ENCODE measurements at regions of chr9 and their contacts with region 1.

Region 1: GRCh38 chr9:99259231-99259918 is 37.3 kb downstream of the SEC61B start:
- DNase-seq: peak; percentile 97 to 99
- ATAC-seq: peak; percentile 59 to 63
- H3K4me3 ChIP-seq: peak overlapping the region; percentile 34 to 49 (median 44)
- H3K27ac ChIP-seq: peak overlapping the region; percentile 93 to 100 (median 98)
- H3K4me1 ChIP-seq: peaks cover 29 to 48% of the 10 kb centered on the region in 2 donors
- H3K27me3 ChIP-seq: no peaks in the 10 kb centered on the region
- CTCF ChIP-seq: peak in 1 of 5 experiments; percentile 38
- POLR2A ChIP-seq: peak; percentile 91 to 94

Region 2: DNA sequence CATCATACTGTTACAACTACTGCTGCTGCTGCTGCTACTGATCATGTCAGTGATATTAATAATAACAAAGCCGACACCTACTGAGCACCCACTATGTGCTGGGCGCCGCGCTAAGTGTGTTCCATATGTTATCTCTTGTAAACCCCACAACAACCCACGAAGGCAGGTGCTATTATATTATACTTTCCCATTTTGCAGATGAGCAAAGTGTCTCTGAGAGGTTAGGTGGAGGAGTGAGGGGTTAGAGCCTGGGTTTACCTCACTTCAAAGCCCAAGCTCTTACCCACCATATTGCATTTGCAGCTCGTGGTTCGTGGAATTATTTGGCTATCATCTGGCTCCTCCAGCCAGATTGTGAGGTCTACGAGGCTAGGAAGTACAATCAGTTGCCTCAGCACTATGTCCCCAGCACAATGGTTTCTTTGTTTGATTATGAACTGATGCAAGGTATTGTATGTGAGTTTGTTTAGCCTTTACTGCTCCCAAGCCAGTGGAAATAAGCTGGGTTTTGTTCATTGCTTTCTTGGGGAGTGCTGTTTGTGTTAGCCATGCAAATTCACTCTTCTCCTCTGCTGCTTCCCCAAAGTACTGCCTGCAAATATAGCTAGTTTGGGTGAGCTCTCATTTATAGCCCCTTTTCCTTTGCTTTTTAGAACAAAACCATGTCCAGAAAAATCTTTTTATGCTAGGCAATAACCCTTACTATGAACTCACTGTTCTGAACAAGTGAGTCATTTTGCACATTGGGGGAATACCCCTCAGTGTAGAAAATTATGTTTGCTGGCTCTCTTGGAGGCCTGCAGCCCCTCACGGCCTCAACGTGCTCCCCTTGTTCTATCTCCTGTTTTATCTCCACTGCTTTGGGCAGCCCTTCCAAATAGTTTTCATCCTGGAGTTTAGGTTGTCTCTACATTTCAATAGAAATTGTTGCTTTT is 85.5 kb before region 1 on chr9:
- in situ Hi-C with region 1: no loop called
- intact Hi-C with region 1: no loop called
- DNase-seq: no peak
- ATAC-seq: no peak
- H3K4me3 ChIP-seq: no peak overlapping the region
- H3K27ac ChIP-seq: no peak overlapping the region
- H3K4me1 ChIP-seq: no peaks in the 10 kb centered on the region
- H3K27me3 ChIP-seq: peaks cover 0 to 4% (median 0%) of the 10 kb centered on the region in 3 donors
- CTCF ChIP-seq: no peak
- POLR2A ChIP-seq: no peak

Region 3: DNA sequence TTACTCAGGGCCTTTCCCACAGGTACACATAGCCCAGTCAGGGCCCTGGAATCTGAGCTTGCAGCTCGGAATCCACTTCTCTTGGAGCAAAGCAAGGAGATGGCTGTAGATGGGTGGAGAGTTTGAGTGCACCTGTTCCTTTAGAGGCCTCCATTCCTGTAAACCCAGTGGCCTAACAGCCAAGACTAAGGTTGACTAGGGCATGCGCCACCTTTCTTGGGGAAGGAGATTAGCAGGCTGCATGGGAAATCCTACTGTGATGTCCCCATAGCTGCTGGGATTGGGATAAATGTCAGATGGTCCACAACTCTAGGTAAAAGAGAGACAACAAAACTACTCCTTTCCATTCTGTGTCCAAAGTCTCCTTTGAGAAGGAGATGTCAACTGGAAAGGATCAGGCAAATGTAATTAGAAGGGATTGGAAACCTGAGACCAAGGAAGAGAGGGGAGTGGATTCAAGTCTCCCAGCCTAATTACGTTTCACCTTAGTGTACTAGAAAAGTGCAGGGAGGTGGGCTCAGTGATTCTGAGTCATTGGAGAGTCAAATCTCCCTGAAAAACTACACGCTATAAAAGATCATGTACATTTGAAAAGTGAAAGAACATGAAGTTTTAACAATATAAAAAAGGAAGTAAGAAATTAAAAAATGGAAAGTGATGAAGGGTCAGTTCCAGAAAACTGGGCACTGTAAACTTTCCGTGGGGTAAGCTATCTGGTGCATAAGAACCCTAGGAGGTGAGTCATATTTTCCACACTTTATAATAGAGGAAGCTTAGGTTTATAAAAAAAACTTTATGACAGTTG is 66.9 kb after region 1 on chr9:
- in situ Hi-C with region 1: no loop called
- intact Hi-C with region 1: no loop called
- DNase-seq: no peak
- ATAC-seq: no peak
- H3K4me3 ChIP-seq: no peak overlapping the region
- H3K27ac ChIP-seq: no peak overlapping the region
- H3K4me1 ChIP-seq: no peaks in the 10 kb centered on the region
- H3K27me3 ChIP-seq: no peaks in the 10 kb centered on the region
- CTCF ChIP-seq: no peak
- POLR2A ChIP-seq: no peak

Region 4: DNA sequence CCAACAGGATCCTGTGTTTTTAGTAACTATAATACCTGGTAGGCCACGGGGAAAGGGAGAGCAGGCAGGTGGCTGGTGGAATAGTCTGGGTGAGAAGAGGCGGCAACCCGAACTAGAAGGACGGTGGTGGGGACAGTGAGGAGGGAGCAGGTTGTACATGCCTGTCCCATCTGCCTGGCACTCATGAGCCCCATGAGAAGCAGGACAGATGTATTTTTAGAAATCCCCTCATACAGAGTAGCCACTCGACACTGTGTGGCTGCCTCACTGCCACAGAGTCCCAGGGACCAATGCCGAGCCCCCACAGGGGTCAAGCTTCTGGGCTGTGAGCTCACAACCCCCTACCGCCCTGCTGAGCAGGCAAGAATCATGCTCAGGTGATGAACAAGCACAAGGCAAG is 99.3 kb after region 1 on chr9:
- in situ Hi-C with region 1: loop called in 3 of 4 experiments (anchors 5 to 10 kb)
- intact Hi-C with region 1: loop called (anchors 1 kb)
- DNase-seq: peak; percentile 82 to 95
- ATAC-seq: peak; percentile 53 to 59
- H3K4me3 ChIP-seq: peak overlapping the region in 3 of 4 donors; percentile 8 to 22 (median 14)
- H3K27ac ChIP-seq: peak overlapping the region; percentile 83 to 99 (median 96)
- H3K4me1 ChIP-seq: peaks cover 43 to 49% of the 10 kb centered on the region in 2 donors
- H3K27me3 ChIP-seq: no peaks in the 10 kb centered on the region
- CTCF ChIP-seq: no peak
- POLR2A ChIP-seq: peak; percentile 53 to 83

Region 5: DNA sequence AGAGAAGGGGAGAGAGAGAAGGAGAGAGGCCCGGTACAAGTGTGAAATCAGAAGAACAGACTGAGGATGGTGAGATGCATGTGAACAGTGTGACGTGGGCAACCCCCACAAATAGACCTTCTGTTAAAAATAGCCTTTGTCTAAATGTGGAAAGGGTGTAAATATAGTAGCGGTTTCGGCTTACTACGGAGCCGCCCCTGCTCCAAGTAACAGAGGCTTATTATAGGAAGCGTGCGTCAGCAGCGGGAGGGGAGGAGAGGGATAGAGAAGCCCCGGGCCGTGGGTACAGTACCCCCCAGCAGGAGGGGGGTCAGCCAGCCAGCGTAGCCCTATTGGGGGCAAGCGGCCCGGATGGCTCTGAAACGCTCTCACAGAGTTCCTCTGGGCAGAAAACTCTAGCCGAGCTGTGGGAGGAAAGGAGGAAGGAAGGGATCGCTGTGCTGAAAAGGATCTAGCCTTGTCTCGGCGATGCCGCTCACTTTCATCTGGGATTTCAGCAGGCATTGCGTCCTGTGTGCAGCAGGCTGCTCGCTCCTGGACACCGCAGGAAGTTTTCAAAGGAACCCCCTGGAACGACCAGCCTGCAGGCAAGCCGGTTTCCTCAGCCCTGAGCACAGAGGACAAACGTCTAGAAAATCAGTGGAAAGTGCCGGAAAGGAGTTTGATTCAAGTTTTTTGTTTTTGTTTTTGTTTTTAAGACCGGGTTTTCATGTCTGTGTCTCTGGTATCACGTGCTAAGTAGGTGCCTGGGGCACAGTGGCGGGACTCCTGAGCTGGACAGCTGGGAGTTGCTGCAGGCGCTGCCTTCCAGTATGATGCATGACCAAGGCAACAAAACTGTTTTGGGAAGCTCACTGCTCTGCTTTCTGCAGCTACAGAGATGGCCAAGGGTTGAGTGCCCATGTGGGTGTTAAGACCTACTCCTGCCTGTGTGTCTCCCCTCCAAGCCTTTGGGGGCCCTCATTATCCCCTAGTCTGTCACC is 109.3 kb after region 1 on chr9:
- in situ Hi-C with region 1: loop called in 1 of 4 experiments (anchors 10 kb)
- intact Hi-C with region 1: loop called (anchors 1 kb)
- DNase-seq: peak; percentile 79 to 93
- ATAC-seq: peak; percentile 85 to 92
- H3K4me3 ChIP-seq: peak overlapping the region; percentile 53 to 70 (median 60)
- H3K27ac ChIP-seq: peak overlapping the region; percentile 92 to 99 (median 96)
- H3K4me1 ChIP-seq: peaks cover 37 to 48% of the 10 kb centered on the region in 2 donors
- H3K27me3 ChIP-seq: no peaks in the 10 kb centered on the region
- CTCF ChIP-seq: no peak
- POLR2A ChIP-seq: peak; percentile 92 to 93

Region 6: GRCh38 chr9:99445371-99445891 is 186.1 kb after region 1 on chr9:
- in situ Hi-C with region 1: no loop called
- intact Hi-C with region 1: loop called (anchors 2 kb)
- DNase-seq: peak; percentile 72 to 88
- ATAC-seq: peak; percentile 98 to 99
- H3K4me3 ChIP-seq: no peak overlapping the region
- H3K27ac ChIP-seq: peak overlapping the region; percentile 60 to 89 (median 76)
- H3K4me1 ChIP-seq: peaks cover 16 to 19% of the 10 kb centered on the region in 2 donors
- H3K27me3 ChIP-seq: no peaks in the 10 kb centered on the region
- CTCF ChIP-seq: no peak
- POLR2A ChIP-seq: peak in 1 of 2 donors; percentile 39

Region 7: DNA sequence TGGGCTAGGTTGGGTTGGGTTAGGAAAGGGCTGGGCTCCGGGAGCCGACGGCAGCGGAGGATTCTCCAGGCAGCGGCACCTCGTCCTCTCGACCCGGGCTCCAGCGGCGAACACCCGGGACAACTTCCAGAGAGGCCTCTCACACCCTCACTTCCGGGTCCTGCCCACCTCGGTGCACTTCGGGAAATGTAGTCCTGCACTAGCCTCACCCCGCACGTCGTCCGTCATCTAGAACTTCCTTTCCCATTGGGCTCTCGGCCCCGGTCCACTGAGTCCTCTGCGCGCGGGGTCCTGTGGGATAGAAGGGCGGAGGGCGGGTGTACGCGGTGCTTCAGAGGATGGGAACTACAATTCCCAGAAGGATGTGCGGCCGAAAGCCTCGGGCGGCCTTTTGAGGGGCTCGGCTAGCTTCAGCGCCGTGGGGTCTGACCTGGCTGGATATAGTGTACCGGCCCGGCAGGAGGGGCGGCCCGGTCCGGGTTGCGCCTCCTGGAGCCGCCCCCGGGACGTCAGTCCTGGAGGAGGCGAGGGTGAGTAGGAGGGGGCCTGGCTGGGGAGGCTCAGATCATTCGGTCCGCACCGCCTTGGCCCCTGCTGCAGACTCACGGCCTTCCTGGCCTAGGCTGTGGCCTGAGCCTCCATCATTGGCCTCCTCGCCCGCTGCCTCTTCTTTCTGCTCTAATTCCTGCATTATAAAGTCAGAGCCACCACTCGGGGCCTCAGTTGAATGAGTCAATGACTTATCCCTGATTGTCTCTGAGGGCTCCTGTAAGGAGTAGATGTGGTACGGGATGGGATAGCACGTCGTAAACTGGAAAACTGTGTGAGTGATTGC is 839.7 kb after region 1 on chr9 and contains the starts of genes ERP44 and INVS:
- in situ Hi-C with region 1: no loop called
- intact Hi-C with region 1: loop called (anchors 2 kb)
- DNase-seq: peak; percentile 99 to 100
- ATAC-seq: peak; percentile 95
- H3K4me3 ChIP-seq: peak within 1 kb of the TSS; percentile 87 to 98 (median 98)
- H3K27ac ChIP-seq: peak within 1 kb of the TSS; percentile 90 to 99 (median 95)
- H3K4me1 ChIP-seq: peaks cover 31 to 38% of the 10 kb centered on the region in 2 donors
- H3K27me3 ChIP-seq: no peaks in the 10 kb centered on the region
- CTCF ChIP-seq: no peak
- POLR2A ChIP-seq: peak; percentile 92 to 94
- total RNA-seq, gene ERP44: 7.0 to 10.8 (median 9.7) TPM
- total RNA-seq, gene INVS: 5.5 to 13.9 (median 6.7) TPM